ENCODE measurements at regions of chr13 and their contacts with region 1.

Region 1: DNA sequence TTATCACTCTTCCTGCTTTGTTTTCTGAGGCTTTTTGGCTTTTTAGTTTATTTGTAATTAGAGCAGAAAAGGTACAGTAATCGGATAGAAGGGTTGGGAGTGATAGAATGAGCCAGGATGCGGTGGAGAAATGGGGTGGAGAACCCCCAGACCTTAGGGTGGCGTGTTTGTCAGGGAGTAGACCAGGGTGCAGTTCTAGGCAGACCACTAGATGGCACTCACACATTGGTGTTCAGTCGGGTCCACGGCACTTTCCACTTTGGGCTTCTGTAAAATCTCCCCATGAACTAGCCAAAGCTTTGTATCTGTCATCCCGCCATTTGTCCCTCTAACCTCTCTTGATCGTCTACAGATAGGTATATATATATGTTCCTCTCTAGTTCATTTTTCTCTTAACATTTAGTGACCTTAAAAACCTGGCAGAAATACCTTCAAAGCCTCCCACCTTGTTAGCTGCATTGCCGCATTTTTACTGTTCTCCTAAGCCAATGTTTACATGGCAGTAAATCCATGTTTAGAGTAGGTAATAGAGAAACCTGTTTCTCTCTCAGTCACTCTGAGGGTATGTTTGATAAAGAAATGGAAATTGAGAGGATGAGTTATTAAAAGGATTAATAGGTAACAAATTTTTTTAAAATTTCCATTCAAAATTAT is 154.9 kb downstream of the TM9SF2 start:
- DNase-seq: peak; percentile 91
- ATAC-seq: peak; percentile 73
- H3K4me3 Mint-ChIP-seq: peak overlapping the region; percentile 48
- H3K27ac Mint-ChIP-seq: peak overlapping the region; percentile 62
- H3K4me1 Mint-ChIP-seq: peaks cover 49% of the 10 kb centered on the region
- H3K27me3 Mint-ChIP-seq: no peaks in the 10 kb centered on the region

Region 2: DNA sequence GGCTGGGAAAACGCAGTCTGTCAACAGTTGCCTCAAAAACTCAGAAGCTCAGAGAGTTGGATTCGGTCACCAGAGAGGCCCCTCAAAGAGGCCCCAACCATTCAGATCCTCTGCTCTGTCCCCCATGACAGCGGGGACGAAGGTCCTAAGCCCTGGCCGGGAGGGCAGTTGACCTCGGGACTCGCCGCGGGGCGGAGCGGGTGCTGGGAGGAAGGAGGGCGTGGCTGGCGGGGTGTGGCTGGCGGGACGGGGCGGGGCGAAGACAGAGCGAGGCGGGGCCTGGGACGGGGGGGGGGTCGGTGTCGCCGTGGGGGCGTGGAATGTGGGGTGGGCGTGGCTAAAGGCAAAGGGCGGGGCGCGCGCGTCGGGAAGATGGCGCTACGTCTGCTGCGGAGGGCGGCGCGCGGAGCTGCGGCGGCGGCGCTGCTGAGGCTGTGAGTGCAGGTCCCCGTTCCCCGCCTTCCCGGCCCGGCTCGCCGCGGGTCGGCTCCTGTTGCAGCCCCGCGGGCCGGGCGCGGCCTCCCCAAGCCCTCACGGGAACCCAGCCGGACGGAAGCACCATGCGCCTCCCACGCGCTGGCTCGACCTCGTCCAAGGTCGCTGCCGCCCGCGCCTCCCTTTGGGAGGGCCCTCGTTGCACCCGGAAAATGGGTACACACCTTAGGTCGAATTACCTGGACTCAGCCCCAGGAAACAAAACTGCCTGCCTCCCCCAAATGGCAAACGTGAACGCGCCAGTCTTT is 49.7 kb before region 1 on chr13:
- CTCF ChIA-PET with region 1: interaction called, 9 read pairs
- POLR2A ChIA-PET with region 1: no interaction called
- intact Hi-C with region 1: loop called in 1 of 2 experiments (anchors 1 kb)
- DNase-seq: peak; percentile 95
- ATAC-seq: peak; percentile 89
- H3K4me3 Mint-ChIP-seq: peak within 1 kb of the TSS; percentile 83
- H3K27ac Mint-ChIP-seq: peak within 1 kb of the TSS; percentile 81
- H3K4me1 Mint-ChIP-seq: peaks cover 42% of the 10 kb centered on the region
- H3K27me3 Mint-ChIP-seq: no peaks in the 10 kb centered on the region

Region 3: GRCh38 chr13:99859178-99860177 is 203.3 kb after region 1 on chr13:
- CTCF ChIA-PET with region 1: interaction called, 3 read pairs
- POLR2A ChIA-PET with region 1: no interaction called
- intact Hi-C with region 1: loop called (anchors 2 to 5 kb)
- DNase-seq: peak; percentile 82
- ATAC-seq: peak; percentile 88
- H3K4me3 Mint-ChIP-seq: no peak overlapping the region
- H3K27ac Mint-ChIP-seq: no peak overlapping the region
- H3K4me1 Mint-ChIP-seq: peaks cover 9% of the 10 kb centered on the region
- H3K27me3 Mint-ChIP-seq: peaks cover 17% of the 10 kb centered on the region

Region 4: GRCh38 chr13:99916366-99917103 is 260.3 kb after region 1 on chr13:
- CTCF ChIA-PET with region 1: interaction called, 6 read pairs
- POLR2A ChIA-PET with region 1: no interaction called
- intact Hi-C with region 1: loop called (anchors 1 to 5 kb)
- DNase-seq: peak; percentile 21
- ATAC-seq: peak; percentile 83
- H3K4me3 Mint-ChIP-seq: no peak overlapping the region
- H3K27ac Mint-ChIP-seq: no peak overlapping the region
- H3K4me1 Mint-ChIP-seq: peaks cover 8% of the 10 kb centered on the region
- H3K27me3 Mint-ChIP-seq: peaks cover 10% of the 10 kb centered on the region

Region 5: GRCh38 chr13:99980201-99980823 is 324.1 kb after region 1 on chr13:
- CTCF ChIA-PET with region 1: interaction called, 5 read pairs
- POLR2A ChIA-PET with region 1: no interaction called
- intact Hi-C with region 1: loop called in 1 of 2 experiments (anchors 5 kb)
- DNase-seq: peak; percentile 80
- ATAC-seq: peak; percentile 82
- H3K4me3 Mint-ChIP-seq: peak overlapping the region; percentile 30
- H3K27ac Mint-ChIP-seq: no peak overlapping the region
- H3K4me1 Mint-ChIP-seq: peaks cover 25% of the 10 kb centered on the region
- H3K27me3 Mint-ChIP-seq: peaks cover 60% of the 10 kb centered on the region

Region 6: GRCh38 chr13:100514788-100515409 is 858.7 kb after region 1 on chr13:
- CTCF ChIA-PET with region 1: interaction called, 19 read pairs
- POLR2A ChIA-PET with region 1: interaction called, 4 read pairs
- intact Hi-C with region 1: loop called (anchors 1 kb)
- DNase-seq: peak; percentile 86
- ATAC-seq: peak; percentile 94
- H3K4me3 Mint-ChIP-seq: no peak overlapping the region
- H3K27ac Mint-ChIP-seq: no peak overlapping the region
- H3K4me1 Mint-ChIP-seq: peaks cover 10% of the 10 kb centered on the region
- H3K27me3 Mint-ChIP-seq: peaks cover 2% of the 10 kb centered on the region

Region 7: DNA sequence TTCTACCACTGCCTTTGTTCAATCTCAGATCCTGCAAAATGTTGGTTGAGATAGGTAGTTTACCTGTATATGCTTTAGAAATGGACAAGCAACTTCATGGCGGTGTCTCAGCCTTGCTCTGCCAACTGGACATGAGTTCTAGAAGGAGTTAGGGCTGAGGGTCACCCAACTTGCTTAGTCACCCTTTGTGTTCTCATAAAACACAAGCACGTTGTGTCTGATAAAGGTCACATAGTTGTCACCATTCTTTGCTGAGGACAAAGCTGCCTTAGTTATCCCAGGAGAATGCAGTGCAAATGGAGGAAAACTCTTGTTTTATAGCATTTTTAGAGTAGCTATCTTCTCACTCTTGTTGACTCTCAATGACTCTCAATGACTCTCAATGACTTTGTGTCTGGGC is 1236.8 kb after region 1 on chr13:
- CTCF ChIA-PET with region 1: no interaction called
- POLR2A ChIA-PET with region 1: no interaction called
- intact Hi-C with region 1: no loop called
- DNase-seq: no peak
- ATAC-seq: no peak
- H3K4me3 Mint-ChIP-seq: no peak overlapping the region
- H3K27ac Mint-ChIP-seq: no peak overlapping the region
- H3K4me1 Mint-ChIP-seq: no peaks in the 10 kb centered on the region
- H3K27me3 Mint-ChIP-seq: peaks cover 10% of the 10 kb centered on the region

Region 8: DNA sequence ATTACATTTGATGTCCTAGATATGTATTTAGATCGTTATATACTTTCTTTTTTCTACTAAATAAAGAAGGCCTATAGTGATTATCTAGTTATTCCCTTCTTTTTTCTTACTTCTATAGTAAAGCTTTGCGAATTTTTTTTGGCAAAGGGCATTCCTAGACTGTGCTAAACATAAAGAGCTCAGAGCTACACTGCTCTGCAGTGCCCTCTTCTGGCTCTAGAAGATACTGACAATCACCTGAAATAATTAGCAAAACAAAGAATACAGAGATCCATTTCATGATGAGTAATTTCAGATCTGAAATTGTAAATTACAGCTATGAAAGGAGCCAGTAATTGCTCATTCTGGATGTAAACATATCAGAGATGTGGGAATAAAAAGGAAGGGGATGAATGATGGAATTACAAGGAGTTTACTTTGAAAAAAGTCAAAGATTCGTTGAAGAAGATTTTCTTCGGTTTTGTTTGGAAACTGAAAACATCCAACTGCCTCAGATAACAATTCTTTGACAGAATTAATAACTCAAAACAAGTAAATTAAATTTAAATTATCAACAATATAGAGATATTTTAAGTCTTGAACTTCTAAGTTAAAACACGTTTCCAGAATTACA is 1471.6 kb after region 1 on chr13:
- CTCF ChIA-PET with region 1: no interaction called
- POLR2A ChIA-PET with region 1: no interaction called
- intact Hi-C with region 1: loop called in 1 of 2 experiments (anchors 10 kb)
- DNase-seq: peak; percentile 28
- ATAC-seq: peak; percentile 76
- H3K4me3 Mint-ChIP-seq: no peak overlapping the region
- H3K27ac Mint-ChIP-seq: no peak overlapping the region
- H3K4me1 Mint-ChIP-seq: peaks cover 2% of the 10 kb centered on the region
- H3K27me3 Mint-ChIP-seq: peaks cover 6% of the 10 kb centered on the region

Measured in activated CD4-positive, alpha-beta T cell treated with anti-CD3 and anti-CD28 coated beads for 36 hours (primary cell).